ENCODE measurements at regions of chr4 and their contacts with region 1.

Region 1: DNA sequence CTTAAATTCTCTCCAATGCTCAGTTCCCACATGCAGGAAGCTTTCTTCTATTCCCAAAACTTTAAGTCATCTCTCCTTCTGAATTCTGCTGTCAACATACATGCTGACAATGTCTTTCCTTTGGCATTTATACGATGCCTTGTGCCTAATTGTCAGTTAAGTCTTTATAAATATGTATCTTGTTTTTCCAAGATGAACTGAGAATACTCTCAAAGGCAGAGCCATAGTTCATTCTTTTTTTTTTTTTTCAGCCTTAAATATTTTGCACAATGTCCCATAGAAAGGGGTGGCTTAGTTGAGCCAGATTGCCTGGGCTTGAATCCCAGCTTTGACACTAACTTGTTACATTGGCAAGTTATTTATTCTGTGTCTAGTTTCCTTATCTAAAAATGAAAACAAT is 210.6 kb downstream of the QDPR start:
- DNase-seq: no peak
- ATAC-seq: no peak
- H3K4me3 Mint-ChIP-seq: no peak overlapping the region
- H3K27ac Mint-ChIP-seq: no peak overlapping the region
- H3K4me1 Mint-ChIP-seq: no peaks in the 10 kb centered on the region
- H3K27me3 Mint-ChIP-seq: peaks cover 19% of the 10 kb centered on the region

Region 2: DNA sequence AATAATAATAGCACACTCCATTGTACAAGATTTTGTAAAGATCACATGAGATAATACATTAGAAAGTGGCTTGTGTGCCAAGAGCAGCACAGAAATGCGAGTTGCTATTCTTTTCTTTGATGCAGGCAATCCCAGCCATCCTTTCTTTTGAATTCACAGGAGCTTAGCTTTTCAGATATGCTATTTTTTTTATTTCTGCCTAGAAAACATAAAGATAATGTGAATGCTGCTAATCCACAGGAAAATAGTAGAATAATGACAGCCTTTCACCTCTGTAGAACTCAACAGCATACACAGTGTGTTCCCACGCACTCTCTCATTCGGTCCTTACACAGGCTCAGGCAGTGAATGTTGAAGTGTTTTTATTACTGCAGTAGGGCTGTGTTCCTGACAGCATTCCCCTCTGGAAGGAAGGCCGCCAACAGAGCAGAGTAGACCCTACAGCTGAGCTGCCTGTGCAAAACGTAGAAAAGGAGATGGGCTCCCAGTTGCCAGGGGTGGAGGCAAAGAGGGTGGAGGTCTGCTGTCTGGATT is 936.2 kb before region 1 on chr4:
- CTCF ChIA-PET with region 1: no interaction called
- POLR2A ChIA-PET with region 1: no interaction called
- intact Hi-C with region 1: loop called in 1 of 2 experiments (anchors 5 kb)
- DNase-seq: no peak
- ATAC-seq: no peak
- H3K4me3 Mint-ChIP-seq: no peak overlapping the region
- H3K27ac Mint-ChIP-seq: no peak overlapping the region
- H3K4me1 Mint-ChIP-seq: no peaks in the 10 kb centered on the region
- H3K27me3 Mint-ChIP-seq: no peaks in the 10 kb centered on the region